ENCODE measurements at regions of chr20 and their contacts with region 1.

Region 1: GRCh38 chr20:35954200-35954906 is at the start of gene SCAND1:
- DNase-seq: peak; percentile 98
- H3K4me3 Mint-ChIP-seq: peak within 1 kb of the TSS; percentile 96
- H3K27ac Mint-ChIP-seq: peak within 1 kb of the TSS; percentile 99
- H3K4me1 Mint-ChIP-seq: peaks cover 22% of the 10 kb centered on the region
- H3K27me3 Mint-ChIP-seq: no peaks in the 10 kb centered on the region
- total RNA-seq, gene SCAND1: 48.6 to 63.6 TPM

Region 2: DNA sequence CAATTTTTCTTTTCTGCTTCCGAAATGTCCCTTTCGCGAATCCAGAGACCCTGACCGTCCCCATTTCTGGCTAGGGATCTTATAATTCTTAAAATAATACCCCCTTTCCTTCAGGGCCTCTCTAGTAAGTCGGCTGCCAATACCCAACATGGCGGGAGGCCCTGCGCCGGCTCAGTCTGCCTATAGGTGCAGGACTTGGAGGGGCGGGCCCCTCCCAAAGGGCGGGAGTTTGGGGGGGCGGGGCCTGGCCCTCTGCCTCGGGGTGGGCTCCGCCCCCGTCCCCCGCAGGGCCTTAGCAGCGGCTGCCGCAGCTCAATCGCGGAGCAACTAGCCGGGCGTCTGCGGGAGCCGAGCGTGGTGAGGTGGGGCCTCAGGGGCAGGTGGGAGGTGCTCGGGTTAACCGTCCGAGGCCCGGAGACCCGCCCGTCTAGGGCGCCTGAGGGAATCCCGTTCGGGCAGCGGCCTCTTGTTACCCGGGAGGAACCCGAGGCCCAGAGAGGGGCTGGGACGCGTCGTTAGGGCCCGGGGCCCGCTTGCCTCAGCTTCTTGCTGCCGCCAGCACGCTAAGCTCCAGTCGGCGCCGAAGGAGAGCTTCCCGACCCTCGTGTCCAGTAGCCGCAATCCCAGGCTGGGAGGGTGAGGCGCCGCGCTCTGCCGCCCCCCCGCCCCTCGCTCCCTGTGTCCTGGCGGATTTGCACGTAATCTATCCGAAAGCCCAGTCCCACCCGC is 499.3 kb before region 1 on chr20 and contains the start of gene CEP250:
- CTCF ChIA-PET with region 1: interaction called, 20 read pairs
- POLR2A ChIA-PET with region 1: no interaction called
- DNase-seq: peak; percentile 95
- H3K4me3 Mint-ChIP-seq: peak within 1 kb of the TSS; percentile 92
- H3K27ac Mint-ChIP-seq: peak within 1 kb of the TSS; percentile 99
- H3K4me1 Mint-ChIP-seq: peaks cover 36% of the 10 kb centered on the region
- H3K27me3 Mint-ChIP-seq: no peaks in the 10 kb centered on the region
- total RNA-seq, gene CEP250: 56.8 to 75.4 TPM

Region 3: DNA sequence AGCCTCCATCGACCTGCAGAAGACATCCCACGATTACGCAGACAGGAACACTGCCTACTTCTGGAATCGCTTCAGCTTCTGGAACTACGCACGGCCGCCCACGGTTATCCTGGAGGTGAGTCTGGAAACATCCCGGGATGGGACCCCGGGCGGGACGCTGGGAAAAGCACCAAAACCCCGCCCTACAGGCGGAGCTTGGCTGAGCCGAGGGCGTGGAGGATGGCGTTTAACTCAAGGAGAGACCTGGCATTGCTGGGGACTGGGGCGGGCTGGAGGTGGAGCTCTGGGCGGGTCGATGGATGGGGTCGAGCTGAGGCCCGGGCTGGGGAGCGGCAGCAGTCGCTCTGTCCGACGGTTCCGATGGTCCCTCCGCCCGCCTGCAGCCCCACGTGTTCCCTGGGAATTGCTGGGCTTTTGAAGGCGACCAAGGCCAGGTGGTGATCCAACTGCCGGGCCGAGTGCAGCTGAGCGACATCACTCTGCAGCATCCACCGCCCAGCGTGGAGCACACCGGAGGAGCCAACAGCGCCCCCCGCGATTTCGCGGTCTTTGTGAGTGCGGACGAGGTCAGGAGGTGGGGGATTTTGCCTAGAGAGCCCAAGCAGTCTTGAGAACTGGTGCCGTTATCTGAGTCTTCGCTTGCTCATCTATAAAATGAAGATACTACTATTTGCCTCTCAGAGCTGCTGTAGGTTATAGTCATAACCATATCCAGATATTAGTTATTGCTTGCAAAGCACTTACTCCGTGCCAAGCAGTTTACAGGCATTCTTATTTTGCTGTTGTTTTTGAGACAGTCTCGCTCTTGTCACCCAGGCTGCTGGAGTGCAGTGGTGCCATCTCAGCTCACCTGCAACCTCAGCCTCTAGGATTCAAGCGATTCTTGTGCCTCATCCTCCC is 334.9 kb before region 1 on chr20:
- CTCF ChIA-PET with region 1: interaction called, 16 read pairs
- POLR2A ChIA-PET with region 1: interaction called, 10 read pairs
- DNase-seq: peak; percentile 76
- H3K4me3 Mint-ChIP-seq: peak overlapping the region; percentile 77
- H3K27ac Mint-ChIP-seq: peak overlapping the region; percentile 79
- H3K4me1 Mint-ChIP-seq: peaks cover 40% of the 10 kb centered on the region
- H3K27me3 Mint-ChIP-seq: no peaks in the 10 kb centered on the region

Region 4: GRCh38 chr20:35866418-35867197 is 87.7 kb before region 1 on chr20:
- CTCF ChIA-PET with region 1: no interaction called
- POLR2A ChIA-PET with region 1: no interaction called
- DNase-seq: no peak
- H3K4me3 Mint-ChIP-seq: no peak overlapping the region
- H3K27ac Mint-ChIP-seq: peak overlapping the region; percentile 1
- H3K4me1 Mint-ChIP-seq: peaks cover 8% of the 10 kb centered on the region
- H3K27me3 Mint-ChIP-seq: no peaks in the 10 kb centered on the region

Region 5: DNA sequence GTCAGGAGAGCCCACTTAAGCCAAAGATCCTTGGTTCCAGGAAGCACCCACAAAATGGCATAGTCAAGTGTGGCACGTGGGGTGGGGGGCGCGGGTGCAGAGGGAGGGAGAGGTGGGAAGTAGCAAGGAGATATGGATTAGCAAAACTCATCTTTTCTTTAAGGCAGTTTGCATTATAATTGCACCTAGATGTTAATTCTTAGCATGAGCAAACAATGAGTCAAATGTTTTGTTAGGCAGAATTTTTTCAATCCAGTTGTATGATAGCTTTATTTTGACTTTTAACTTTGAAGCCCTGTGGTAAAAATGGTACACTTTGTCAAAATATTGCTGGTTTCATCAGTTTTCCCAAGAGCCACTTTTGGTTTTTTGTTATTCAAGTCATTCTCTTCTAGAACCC is 15.1 kb before region 1 on chr20:
- CTCF ChIA-PET with region 1: interaction called, 54 read pairs
- POLR2A ChIA-PET with region 1: interaction called, 3 read pairs
- DNase-seq: no peak
- H3K4me3 Mint-ChIP-seq: no peak overlapping the region
- H3K27ac Mint-ChIP-seq: no peak overlapping the region
- H3K4me1 Mint-ChIP-seq: peaks cover 8% of the 10 kb centered on the region
- H3K27me3 Mint-ChIP-seq: no peaks in the 10 kb centered on the region

Region 6: DNA sequence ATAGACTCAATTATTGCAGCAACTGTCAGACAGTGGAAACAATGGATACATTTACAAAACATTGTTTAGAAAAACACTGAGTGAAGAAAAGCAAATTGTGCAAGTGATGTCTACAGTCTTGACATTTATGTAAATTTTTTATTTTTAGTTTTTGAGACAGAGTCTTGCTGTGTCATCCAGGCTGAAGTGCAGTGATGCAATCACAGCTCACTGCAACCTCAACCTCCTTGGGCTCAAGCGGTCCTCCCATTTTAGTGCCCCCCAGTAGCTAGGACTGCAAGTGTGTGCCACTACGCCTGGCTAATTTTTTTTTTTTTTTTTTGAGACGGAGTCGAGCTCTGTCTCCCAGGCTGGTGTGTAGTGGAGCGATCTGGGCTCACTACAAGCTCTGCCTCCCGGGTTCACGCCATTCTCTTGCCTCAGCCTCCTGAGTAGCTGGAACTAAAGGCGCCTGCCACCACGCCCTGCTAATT is 23.7 kb after region 1 on chr20:
- CTCF ChIA-PET with region 1: interaction called, 19 read pairs
- POLR2A ChIA-PET with region 1: no interaction called
- DNase-seq: no peak
- H3K4me3 Mint-ChIP-seq: no peak overlapping the region
- H3K27ac Mint-ChIP-seq: no peak overlapping the region
- H3K4me1 Mint-ChIP-seq: no peaks in the 10 kb centered on the region
- H3K27me3 Mint-ChIP-seq: no peaks in the 10 kb centered on the region

Region 7: DNA sequence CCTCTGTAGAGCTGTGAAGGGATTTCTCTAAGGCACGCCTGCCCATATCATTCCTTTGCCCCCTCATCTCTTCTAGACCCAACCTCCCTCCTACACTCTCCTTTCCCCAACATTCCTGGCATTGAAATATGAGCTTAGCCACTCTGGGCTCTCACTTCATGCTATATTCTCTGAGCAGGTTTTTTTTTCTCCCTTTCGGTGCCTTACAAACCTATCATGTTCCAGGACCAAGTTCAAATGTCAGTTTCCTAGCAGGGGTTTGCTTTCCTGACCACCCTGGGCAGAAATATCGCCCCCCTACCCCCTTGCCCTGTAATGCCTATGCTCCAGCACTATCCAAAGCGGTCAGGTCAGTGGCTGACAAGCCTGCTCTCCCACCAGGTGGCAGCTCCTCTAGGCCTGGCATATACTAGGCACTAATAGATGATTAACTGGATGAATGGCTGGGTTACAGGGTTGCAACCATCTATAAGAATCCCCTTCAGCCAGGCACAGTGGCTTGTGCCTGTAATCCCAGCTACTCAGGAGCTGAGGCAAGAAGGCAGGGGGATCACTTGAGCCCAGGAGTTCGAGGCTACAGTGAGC is 256.2 kb after region 1 on chr20:
- CTCF ChIA-PET with region 1: no interaction called
- POLR2A ChIA-PET with region 1: no interaction called
- DNase-seq: no peak
- H3K4me3 Mint-ChIP-seq: no peak overlapping the region
- H3K27ac Mint-ChIP-seq: no peak overlapping the region
- H3K4me1 Mint-ChIP-seq: no peaks in the 10 kb centered on the region
- H3K27me3 Mint-ChIP-seq: no peaks in the 10 kb centered on the region

Measured in activated CD4-positive, alpha-beta T cell treated with anti-CD3 and anti-CD28 coated beads, Interleukin-2, amount 10 ng/mL, durations not matched to agents 7 days and 5 days (primary cell).